ENCODE measurements at regions of chr6 and their contacts with region 1.

Region 1: GRCh38 chr6:115544765-115545673 is 515.7 kb downstream of the FRK start:
- DNase-seq: peak; percentile 28
- H3K4me3 ChIP-seq: no peak overlapping the region
- H3K27ac ChIP-seq: no peak overlapping the region
- H3K4me1 ChIP-seq: no peaks in the 10 kb centered on the region
- H3K27me3 ChIP-seq: no peaks in the 10 kb centered on the region
- CTCF ChIP-seq: peak; percentile 65

Region 2: DNA sequence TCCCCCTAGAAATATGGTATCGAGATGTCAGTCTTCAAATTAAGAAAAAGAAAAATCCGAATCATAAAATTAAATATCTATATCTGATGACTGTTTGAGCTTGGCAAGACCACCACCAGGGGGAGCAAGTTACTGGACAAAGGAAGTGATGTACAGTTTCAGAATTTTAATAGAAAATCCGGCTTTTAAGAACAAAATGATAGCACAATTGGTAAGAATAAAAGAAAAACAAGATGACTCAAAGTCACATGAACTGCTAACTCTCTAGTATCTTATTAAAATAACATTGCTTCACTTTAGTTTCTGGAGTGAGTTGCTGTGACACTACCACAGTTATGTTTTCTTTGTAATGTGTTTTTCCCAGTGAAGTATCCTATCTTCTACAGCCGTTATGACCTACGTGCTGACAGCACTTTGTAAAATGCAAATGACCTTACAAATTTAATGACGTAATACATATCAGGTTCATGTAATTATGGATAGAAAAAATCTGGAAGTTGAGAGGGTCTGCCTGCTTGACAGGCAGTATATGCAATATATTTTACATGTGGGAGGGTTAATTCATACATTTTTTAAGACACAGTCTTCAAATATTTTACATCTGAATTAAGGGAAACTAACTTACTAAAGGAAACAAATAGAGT is 796.9 kb before region 1 on chr6:
- CTCF ChIA-PET with region 1: no interaction called
- POLR2A ChIA-PET with region 1: no interaction called
- intact Hi-C with region 1: loop called (anchors 5 kb)
- DNase-seq: peak; percentile 49
- H3K4me3 ChIP-seq: no peak overlapping the region
- H3K27ac ChIP-seq: no peak overlapping the region
- H3K4me1 ChIP-seq: no peaks in the 10 kb centered on the region
- H3K27me3 ChIP-seq: no peaks in the 10 kb centered on the region
- CTCF ChIP-seq: peak; percentile 84

Region 3: GRCh38 chr6:115896538-115897129 is 351.6 kb after region 1 on chr6:
- CTCF ChIA-PET with region 1: no interaction called
- POLR2A ChIA-PET with region 1: no interaction called
- intact Hi-C with region 1: loop called (anchors 5 kb)
- DNase-seq: peak; percentile 63
- H3K4me3 ChIP-seq: no peak overlapping the region
- H3K27ac ChIP-seq: no peak overlapping the region
- H3K4me1 ChIP-seq: peaks cover 3% of the 10 kb centered on the region
- H3K27me3 ChIP-seq: no peaks in the 10 kb centered on the region
- CTCF ChIP-seq: peak; percentile 92